Stomach (tissue), 19 donors: ENCODE measurements at regions of chr5 and their contacts with region 1.

Region 1: GRCh38 chr5:154403776-154404387 is 41.9 kb upstream of the SAP30L start:
- DNase-seq: no peak
- H3K4me3 ChIP-seq: no peak overlapping the region
- H3K27ac ChIP-seq: peak overlapping the region in 1 of 5 donors; percentile 2
- H3K4me1 ChIP-seq: peaks cover 10 to 20% (median 12%) of the 10 kb centered on the region in 4 donors
- H3K27me3 ChIP-seq: no peaks in the 10 kb centered on the region
- CTCF ChIP-seq: no peak
- EP300 ChIP-seq: no peak
- POLR2A ChIP-seq: no peak

Region 2: DNA sequence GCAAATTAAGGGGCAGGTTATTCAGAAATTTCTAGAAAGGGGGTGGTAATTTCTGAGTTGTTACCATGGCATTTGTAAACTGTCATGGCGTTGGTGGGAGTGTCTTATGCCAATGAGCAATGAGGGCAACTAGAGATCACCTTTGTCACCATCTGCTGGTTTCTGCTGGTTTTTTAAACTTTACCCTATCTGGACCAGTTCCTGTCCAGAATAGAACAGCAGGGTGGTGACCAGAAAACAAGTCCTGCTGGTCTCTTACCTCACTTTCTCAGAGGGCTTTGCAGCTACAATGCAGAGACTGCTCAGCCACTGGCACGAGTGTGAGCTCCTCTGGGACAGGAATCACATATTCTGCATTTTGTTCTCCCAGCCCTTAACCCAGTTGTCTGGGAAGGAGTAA is 416.6 kb before region 1 on chr5:
- intact Hi-C with region 1: no loop called
- DNase-seq: peak in 1 of 2 donors; percentile 28
- H3K4me3 ChIP-seq: no peak overlapping the region
- H3K27ac ChIP-seq: no peak overlapping the region
- H3K4me1 ChIP-seq: no peaks in the 10 kb centered on the region
- H3K27me3 ChIP-seq: no peaks in the 10 kb centered on the region
- CTCF ChIP-seq: no peak
- EP300 ChIP-seq: no peak
- POLR2A ChIP-seq: no peak

Region 3: DNA sequence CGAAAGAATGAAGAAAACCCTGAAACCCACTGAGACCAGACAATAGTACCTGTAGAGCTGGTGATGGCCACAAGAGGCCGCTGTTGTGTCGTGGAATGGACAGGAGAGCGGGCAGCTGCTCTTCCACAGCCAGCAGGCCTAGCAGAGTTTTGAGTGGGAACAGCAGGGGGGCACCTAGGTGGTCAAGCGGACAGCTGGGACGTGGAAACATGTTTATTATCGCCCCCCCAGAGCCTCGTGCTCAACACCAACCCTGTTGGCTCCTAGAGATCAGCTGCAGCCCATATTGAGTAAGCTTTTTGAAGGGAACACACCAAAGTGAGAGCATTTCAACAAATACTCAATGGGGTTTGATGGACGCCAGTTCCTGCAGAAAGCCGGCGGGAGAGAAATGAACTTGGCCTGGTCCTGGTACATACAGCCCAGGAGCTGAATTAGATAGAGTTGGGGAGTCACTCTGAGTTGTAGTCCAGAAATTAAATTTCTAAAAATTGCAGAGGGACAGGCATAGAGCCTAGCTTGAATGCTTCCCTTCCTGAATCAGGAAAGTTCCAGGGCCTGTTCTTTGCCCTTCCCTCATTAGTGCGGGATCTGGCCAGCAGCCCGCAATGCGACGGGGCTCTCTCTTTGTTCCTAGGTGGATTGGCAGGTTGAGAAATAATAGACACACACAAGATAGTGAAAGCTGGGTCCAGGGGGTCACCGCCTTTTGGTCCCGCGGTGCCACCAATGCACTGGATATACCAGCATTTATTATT is 331.3 kb before region 1 on chr5:
- intact Hi-C with region 1: loop called (anchors 5 kb)
- DNase-seq: peak; percentile 89 to 93
- H3K4me3 ChIP-seq: no peak overlapping the region
- H3K27ac ChIP-seq: no peak overlapping the region
- H3K4me1 ChIP-seq: peaks cover 4 to 19% (median 17%) of the 10 kb centered on the region in 4 donors
- H3K27me3 ChIP-seq: no peaks in the 10 kb centered on the region
- CTCF ChIP-seq: peak in 5 of 7 experiments; percentile 83 to 95 (median 88)
- EP300 ChIP-seq: no peak
- POLR2A ChIP-seq: no peak